ENCODE measurements at regions of chr11 and their contacts with region 1.

Region 1: GRCh38 chr11:126538071-126538470 is 182.6 kb downstream of the ST3GAL4 start:
- DNase-seq: no peak
- H3K4me3 Mint-ChIP-seq: no peak overlapping the region
- H3K27ac Mint-ChIP-seq: no peak overlapping the region
- H3K4me1 Mint-ChIP-seq: no peaks in the 10 kb centered on the region
- H3K27me3 Mint-ChIP-seq: peaks cover 84% of the 10 kb centered on the region
- CTCF ChIP-seq: no peak

Region 2: GRCh38 chr11:125062931-125063428 is 1475.1 kb before region 1 on chr11 and contains the start of gene SLC37A2:
- CTCF ChIA-PET with region 1: interaction called, 10 read pairs
- intact Hi-C with region 1: no loop called
- DNase-seq: peak; percentile 68
- H3K4me3 Mint-ChIP-seq: peak within 1 kb of the TSS; percentile 75
- H3K27ac Mint-ChIP-seq: peak within 1 kb of the TSS; percentile 47
- H3K4me1 Mint-ChIP-seq: peaks cover 7% of the 10 kb centered on the region
- H3K27me3 Mint-ChIP-seq: no peaks in the 10 kb centered on the region
- CTCF ChIP-seq: no peak
- total RNA-seq, gene SLC37A2: 2.5 and 4.3 TPM in 2 replicates

Region 3: DNA sequence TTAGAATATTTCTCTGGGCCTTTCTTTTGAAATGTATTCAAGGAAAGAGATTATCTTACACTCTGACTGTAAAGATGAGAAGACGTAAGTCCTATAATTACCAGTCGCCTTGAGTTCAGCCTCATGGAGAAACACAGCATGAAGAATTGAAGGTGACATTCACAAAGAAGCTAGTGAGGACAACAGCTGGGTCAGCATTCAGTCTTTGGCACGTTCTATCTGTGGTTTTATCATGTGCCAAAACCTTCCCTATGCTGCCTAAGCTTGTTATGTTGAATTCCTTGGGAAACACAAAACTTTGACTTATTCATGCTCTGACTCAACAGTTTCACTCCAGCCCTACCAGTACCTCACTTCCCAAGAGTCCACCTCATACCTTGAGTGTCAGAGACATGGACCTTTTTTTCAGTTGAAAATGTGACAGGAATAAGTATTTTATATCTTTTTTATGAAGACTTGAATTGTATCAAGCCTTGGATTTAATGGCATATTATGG is 661.3 kb after region 1 on chr11:
- CTCF ChIA-PET with region 1: no interaction called
- intact Hi-C with region 1: no loop called
- DNase-seq: no peak
- H3K4me3 Mint-ChIP-seq: no peak overlapping the region
- H3K27ac Mint-ChIP-seq: no peak overlapping the region
- H3K4me1 Mint-ChIP-seq: no peaks in the 10 kb centered on the region
- H3K27me3 Mint-ChIP-seq: no peaks in the 10 kb centered on the region
- CTCF ChIP-seq: no peak

Measured in Calu3 (cell line).